Heart left ventricle (tissue), 16 donors: ENCODE measurements at regions of chr1 and their contacts with region 1.

Region 1: DNA sequence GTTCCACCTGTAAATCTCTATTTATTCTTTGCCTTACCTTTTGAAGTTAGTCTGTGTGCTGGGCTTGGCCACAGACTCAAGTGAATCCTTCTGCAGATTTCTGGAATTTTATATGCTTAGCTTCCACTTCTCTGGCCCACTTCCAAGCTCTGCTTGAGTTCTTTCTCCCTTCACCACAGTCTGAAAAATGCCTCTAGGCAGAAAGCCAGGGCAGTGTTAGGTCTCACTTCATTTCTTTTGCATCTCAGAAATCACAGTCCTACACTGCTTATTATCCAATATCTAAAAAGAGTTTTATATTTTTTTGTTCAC is 48.9 kb downstream of the INKA2 start:
- DNase-seq: peak in 4 of 5 donors; percentile 39 to 69 (median 48)
- ATAC-seq: peak in 3 of 4 donors; percentile 33 to 62 (median 54)
- H3K4me3 ChIP-seq: no peak overlapping the region
- H3K27ac ChIP-seq: peak overlapping the region in 3 of 12 donors; percentile 31 to 60 (median 47)
- H3K4me1 ChIP-seq: peaks cover 0 to 33% (median 12%) of the 10 kb centered on the region in 12 donors
- H3K27me3 ChIP-seq: no peaks in the 10 kb centered on the region
- CTCF ChIP-seq: no peak
- POLR2A ChIP-seq: no peak

Region 2: DNA sequence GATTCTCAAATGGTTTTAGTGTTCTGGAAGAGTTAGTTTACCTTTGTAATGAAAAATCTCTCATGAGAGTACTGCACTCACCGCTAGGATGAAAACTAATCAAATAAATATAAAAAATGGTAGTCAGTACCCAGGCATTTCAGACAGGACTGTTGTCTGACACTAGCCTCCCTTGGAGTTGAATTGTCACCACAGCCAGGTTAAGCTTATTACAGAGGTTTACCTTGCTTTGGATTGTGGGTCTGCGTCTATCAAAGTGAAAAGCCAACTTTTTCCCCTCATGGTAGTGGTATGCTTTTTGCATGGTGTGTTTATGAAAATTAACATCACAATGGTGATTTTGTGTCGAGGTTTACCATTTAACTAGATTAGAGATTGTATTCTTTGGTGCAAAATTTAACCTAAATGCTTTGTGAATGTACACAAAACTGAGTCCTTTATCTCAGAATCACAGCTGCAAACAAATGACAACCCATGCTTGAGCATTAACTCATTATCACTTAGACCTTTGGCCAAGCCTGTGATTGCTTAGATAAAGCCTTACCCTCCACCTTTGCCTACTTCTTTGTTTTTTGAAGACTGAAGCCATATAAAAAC is 50.6 kb before region 1 on chr1:
- intact Hi-C with region 1: loop called in 1 of 10 experiments (anchors 10 kb)
- DNase-seq: no peak
- ATAC-seq: no peak
- H3K4me3 ChIP-seq: no peak overlapping the region
- H3K27ac ChIP-seq: peak overlapping the region in 1 of 12 donors; percentile 57
- H3K4me1 ChIP-seq: peaks cover 0 to 50% (median 26%) of the 10 kb centered on the region in 12 donors
- H3K27me3 ChIP-seq: no peaks in the 10 kb centered on the region
- CTCF ChIP-seq: no peak
- POLR2A ChIP-seq: no peak